MCF 10A (cell line): ENCODE measurements at regions of chr5 and their contacts with region 1.

Region 1: GRCh38 chr5:141968914-141969608 is at the start of gene RNF14:
- DNase-seq: peak; percentile 97
- H3K4me3 Mint-ChIP-seq: peak within 1 kb of the TSS; percentile 88
- H3K27ac Mint-ChIP-seq: peak within 1 kb of the TSS; percentile 99
- H3K4me1 Mint-ChIP-seq: peaks cover 24% of the 10 kb centered on the region
- H3K27me3 Mint-ChIP-seq: no peaks in the 10 kb centered on the region
- CTCF ChIP-seq: peak; percentile 100
- total RNA-seq, gene RNF14: 78.0 and 81.3 TPM in 2 replicates

Region 2: DNA sequence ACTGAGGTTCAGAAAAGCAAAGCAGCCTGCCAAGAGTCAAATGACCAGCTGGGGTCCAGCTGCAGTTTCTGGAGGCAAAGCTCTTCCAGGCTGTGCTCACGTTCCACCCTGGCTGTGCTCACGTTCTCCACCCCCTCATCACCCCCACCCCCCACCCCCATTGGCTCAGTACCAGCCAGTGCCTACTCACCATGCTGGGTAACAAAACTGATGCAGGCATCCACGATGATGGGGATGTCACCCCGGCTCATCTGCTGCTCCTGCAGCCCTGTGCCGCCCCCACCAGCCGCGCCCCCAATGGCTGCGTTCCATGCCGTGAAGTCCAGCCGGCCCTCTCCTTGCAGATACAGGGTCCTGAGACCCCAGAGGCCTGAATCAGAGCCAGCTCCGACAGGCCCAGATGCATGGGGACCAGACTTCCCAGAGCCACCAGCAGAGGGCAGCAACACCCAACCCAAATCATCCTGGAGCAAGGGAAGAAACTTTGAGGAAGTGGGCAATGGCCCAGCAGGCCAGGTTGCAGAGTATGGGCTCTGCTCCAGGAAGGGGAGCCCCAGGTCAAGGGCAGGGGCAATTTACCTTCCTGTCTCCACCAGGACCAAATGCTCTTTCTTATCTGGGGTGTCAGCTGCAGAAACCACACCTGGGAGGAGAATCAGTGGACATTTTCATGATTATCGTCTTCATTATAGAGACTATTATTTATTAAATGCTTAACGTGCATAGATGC is 304.2 kb before region 1 on chr5:
- CTCF ChIA-PET with region 1: interaction called, 15 read pairs
- POLR2A ChIA-PET with region 1: interaction called, 8 read pairs
- intact Hi-C with region 1: no loop called
- DNase-seq: peak; percentile 83
- H3K4me3 Mint-ChIP-seq: no peak overlapping the region
- H3K27ac Mint-ChIP-seq: no peak overlapping the region
- H3K4me1 Mint-ChIP-seq: peaks cover 4% of the 10 kb centered on the region
- H3K27me3 Mint-ChIP-seq: no peaks in the 10 kb centered on the region
- CTCF ChIP-seq: peak; percentile 94

Region 3: GRCh38 chr5:141691867-141692532 is 277.1 kb before region 1 on chr5:
- CTCF ChIA-PET with region 1: interaction called, 395 read pairs
- POLR2A ChIA-PET with region 1: interaction called, 16 read pairs
- intact Hi-C with region 1: loop called (anchors 2 kb)
- DNase-seq: peak; percentile 87
- H3K4me3 Mint-ChIP-seq: peak overlapping the region; percentile 62
- H3K27ac Mint-ChIP-seq: peak overlapping the region; percentile 43
- H3K4me1 Mint-ChIP-seq: peaks cover 8% of the 10 kb centered on the region
- H3K27me3 Mint-ChIP-seq: peaks cover 35% of the 10 kb centered on the region
- CTCF ChIP-seq: peak; percentile 99

Region 4: DNA sequence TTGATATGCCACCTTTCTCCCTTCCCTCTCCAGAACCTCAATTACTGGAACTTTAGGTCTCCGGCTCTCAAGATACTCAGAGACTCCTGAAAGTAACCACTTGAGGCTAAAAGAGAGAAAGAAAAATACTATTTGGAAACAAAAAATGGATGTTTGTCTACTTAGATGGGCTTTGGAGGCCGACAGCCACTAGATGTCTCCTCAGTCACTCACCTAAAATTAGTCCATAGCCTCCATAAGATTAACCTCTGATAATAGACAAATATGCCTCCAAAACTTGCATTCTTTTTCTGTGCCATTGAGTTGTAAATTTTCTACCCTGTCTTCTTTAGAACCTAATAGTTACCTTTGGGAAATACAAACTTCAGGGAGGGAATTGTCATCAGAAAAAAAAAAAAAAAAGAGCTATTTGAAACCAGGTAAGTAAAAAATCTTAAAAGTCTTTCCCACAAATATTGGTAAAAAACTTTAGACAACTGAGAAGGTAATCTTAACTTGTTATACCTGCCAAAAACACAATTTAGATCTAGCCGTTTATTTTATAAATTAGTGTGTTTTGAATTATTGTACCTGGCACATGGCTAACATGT is 79.7 kb before region 1 on chr5:
- CTCF ChIA-PET with region 1: interaction called, 519 read pairs
- POLR2A ChIA-PET with region 1: interaction called, 9 read pairs
- intact Hi-C with region 1: no loop called
- DNase-seq: peak; percentile 45
- H3K4me3 Mint-ChIP-seq: no peak overlapping the region
- H3K27ac Mint-ChIP-seq: no peak overlapping the region
- H3K4me1 Mint-ChIP-seq: no peaks in the 10 kb centered on the region
- H3K27me3 Mint-ChIP-seq: peaks cover 48% of the 10 kb centered on the region
- CTCF ChIP-seq: peak; percentile 60

Region 5: DNA sequence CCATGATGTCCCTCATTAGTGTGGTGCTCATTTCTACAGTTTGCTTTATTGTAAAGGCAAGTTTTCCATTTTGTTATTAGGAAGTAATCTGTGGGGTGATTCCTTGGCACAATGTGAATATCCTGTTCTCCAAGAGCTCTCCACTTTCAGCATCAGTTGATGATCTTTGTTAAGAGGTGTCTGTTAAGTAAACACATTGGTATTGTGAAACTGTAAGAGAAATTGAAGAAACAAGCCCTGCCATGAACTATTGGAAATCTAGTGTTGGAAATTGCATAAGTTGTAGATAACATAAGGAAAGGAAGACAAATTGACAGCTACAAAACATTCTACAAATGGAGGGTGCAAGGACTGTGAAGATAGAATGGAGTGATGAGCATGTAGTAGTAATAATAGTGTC is 17.0 kb after region 1 on chr5:
- CTCF ChIA-PET with region 1: interaction called, 62 read pairs
- POLR2A ChIA-PET with region 1: interaction called, 37 read pairs
- intact Hi-C with region 1: no loop called
- DNase-seq: no peak
- H3K4me3 Mint-ChIP-seq: no peak overlapping the region
- H3K27ac Mint-ChIP-seq: no peak overlapping the region
- H3K4me1 Mint-ChIP-seq: no peaks in the 10 kb centered on the region
- H3K27me3 Mint-ChIP-seq: no peaks in the 10 kb centered on the region
- CTCF ChIP-seq: no peak

Region 6: DNA sequence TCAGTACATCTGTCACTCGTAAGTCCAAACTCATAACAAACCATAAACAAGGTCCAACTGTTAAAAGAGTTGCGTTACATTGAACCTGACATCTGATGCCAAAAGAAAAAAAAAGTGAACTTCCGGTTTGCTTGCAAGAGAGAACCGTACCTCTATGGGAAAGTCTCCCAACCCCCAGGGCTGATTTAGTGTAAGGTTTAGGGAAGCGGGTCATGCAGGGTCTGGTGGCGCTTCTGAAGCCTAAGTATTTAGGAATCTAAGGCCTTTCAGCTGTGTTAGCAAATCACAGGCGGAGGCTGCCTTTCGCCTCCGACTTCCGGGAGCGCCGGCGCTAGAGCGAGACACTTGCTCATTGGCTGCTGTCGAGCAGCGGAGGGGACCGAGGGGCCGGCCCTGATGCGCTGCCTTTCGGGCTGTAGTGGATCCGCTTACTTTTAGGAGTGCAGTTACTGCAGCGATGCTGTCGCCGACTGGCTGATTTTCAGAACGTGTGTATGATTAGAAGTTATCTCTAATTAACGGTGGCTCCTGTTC is 55.8 kb after region 1 on chr5:
- CTCF ChIA-PET with region 1: no interaction called
- POLR2A ChIA-PET with region 1: interaction called, 18 read pairs
- intact Hi-C with region 1: no loop called
- DNase-seq: peak; percentile 91
- H3K4me3 Mint-ChIP-seq: peak overlapping the region; percentile 83
- H3K27ac Mint-ChIP-seq: peak overlapping the region; percentile 96
- H3K4me1 Mint-ChIP-seq: peaks cover 6% of the 10 kb centered on the region
- H3K27me3 Mint-ChIP-seq: no peaks in the 10 kb centered on the region
- CTCF ChIP-seq: no peak

Region 7: DNA sequence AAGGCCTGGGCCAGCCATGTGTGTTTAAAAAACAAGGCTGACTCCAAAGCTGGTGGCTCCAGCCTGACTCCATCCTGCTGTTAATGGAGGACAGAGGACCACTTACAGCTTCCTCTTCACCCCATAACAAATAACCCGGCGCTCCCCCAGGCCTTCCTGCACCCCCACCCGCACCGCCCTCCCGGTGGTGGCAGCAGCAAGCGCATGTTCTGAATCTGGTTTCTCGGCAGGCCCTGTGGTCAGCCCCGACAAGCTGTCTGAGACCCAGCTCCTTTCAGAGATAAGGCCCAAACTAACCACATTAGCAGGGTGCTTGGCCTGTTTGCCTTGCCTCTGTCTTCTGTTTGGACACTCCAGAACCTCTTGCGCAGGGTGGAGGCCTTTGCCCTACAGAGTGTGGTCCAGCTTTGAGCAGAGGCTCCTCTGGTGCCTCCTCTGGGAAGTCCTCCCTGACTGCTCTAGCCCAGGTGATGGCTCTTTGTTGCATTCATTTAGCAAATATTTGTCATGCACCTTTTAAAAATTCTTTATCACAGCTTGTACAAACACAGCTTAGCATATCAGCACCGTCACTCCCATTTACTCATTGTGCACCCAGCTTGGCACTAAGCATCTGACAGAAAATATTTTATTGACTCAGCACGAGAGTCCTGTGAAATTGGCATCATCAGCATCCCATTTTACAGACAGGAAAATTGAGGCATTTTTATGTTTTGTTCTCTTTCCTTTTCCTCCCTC is 218.0 kb after region 1 on chr5:
- CTCF ChIA-PET with region 1: no interaction called
- POLR2A ChIA-PET with region 1: no interaction called
- intact Hi-C with region 1: no loop called
- DNase-seq: no peak
- H3K4me3 Mint-ChIP-seq: no peak overlapping the region
- H3K27ac Mint-ChIP-seq: no peak overlapping the region
- H3K4me1 Mint-ChIP-seq: no peaks in the 10 kb centered on the region
- H3K27me3 Mint-ChIP-seq: peaks cover 14% of the 10 kb centered on the region
- CTCF ChIP-seq: no peak